AG04450 (cell line): ENCODE measurements at regions of chr22 and their contacts with region 1.

Region 1: GRCh38 chr22:30235687-30236170 is 10.8 kb downstream of the LIF start:
- DNase-seq: peak; percentile 61
- H3K4me3 ChIP-seq: no peak overlapping the region
- H3K27ac ChIP-seq: peak overlapping the region; percentile 90
- H3K27me3 ChIP-seq: no peaks in the 10 kb centered on the region
- CTCF ChIP-seq: no peak

Region 2: DNA sequence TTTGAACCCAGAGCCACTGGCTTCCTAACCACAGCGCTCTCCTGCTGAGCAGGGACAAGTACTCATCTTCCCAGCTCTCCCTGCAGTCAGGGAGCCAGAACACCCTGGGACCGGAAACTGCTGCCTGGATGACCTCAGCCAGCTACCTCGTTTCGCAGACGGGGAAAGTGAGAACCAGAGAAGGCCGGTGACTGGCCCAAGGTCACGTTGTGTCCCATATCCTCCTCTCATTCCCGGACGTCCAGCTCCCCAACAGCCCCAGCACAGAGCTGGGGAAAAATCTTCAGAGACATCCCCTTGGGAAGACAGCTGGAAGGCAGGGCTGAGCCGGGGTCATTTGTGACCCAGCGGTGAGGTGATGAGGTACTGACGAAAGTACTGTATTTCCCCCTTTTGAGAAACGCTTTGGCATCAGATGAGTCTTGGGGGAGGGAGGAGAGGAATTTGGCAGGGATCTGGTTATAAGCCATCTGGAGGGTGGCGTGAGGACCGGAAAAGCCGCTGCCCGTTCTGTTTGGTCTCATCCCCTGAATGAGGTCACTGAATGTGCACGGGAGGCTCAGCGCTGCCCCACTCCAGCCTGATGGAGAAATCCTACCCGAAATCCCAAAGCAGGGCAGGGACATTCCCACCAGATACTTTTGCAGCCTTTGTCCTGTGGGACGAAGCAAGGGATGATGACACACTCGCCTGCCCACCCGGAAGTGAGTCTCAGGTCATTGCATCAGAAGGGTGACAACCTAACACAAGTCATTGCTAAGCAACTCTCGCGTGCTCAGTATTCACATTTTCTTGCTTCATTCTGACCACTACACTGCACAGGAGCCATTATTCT is 30.2 kb before region 1 on chr22:
- CTCF ChIA-PET with region 1: no interaction called
- POLR2A ChIA-PET with region 1: interaction called, 14 read pairs
- DNase-seq: peak; percentile 98
- H3K4me3 ChIP-seq: no peak overlapping the region
- H3K27ac ChIP-seq: peak overlapping the region; percentile 100
- H3K27me3 ChIP-seq: no peaks in the 10 kb centered on the region
- CTCF ChIP-seq: no peak

Region 3: GRCh38 chr22:30348809-30349208 is 113.1 kb after region 1 on chr22:
- CTCF ChIA-PET with region 1: no interaction called
- POLR2A ChIA-PET with region 1: no interaction called
- DNase-seq: no peak
- H3K4me3 ChIP-seq: no peak overlapping the region
- H3K27ac ChIP-seq: peak overlapping the region; percentile 52
- H3K27me3 ChIP-seq: no peaks in the 10 kb centered on the region
- CTCF ChIP-seq: no peak